ENCODE measurements at regions of chr22 and their contacts with region 1.

Region 1: GRCh38 chr22:49767355-49768062 is 60.2 kb downstream of the BRD1 start:
- DNase-seq: peak; percentile 61
- H3K4me3 ChIP-seq: no peak overlapping the region
- H3K27ac ChIP-seq: no peak overlapping the region
- H3K4me1 ChIP-seq: peaks cover 0 to 16% (median 12%) of the 10 kb centered on the region in 4 donors
- H3K27me3 ChIP-seq: no peaks in the 10 kb centered on the region
- CTCF ChIP-seq: peak; percentile 49 to 69 (median 59)
- EP300 ChIP-seq: no peak
- POLR2A ChIP-seq: no peak

Region 2: DNA sequence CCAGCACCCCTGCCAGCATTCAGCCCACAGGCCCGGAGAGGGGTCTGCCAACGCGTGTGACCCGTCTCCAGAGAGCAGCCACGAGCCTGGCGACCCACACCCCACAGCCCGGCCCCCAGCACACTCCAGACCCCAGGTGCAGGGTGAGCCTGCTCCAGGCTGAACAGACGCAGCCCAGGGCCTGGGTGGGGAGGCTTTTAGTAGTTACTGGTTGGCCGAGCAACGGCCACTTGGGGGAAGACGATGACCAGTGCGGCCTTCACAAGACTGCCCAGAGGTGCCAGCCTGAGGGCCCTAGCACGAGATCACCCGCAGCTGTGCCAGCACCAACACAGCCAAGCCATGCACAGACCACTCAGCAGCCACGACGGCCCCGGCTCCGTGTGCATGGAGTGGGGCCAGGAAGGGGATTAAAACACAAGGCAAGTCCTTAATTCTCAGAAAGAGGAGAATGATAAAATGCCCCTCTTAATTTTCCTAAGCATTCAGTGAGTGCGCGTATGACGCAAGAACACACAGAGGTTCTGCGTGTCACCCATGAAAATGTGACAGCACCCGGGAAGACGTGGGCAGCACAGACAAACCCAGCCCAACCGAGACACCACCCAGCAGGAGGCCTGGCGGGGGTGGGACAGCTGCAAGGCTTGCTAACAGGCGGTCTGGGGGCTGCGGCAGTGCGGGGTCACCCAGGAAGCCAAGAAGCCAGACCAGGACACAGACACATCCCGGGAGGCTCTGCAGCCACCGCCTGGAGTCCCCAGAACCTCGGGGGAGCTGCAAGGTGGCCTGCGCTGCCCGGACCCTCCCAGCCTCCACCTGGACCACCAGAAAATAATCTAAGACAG is 12.6 kb after region 1 on chr22:
- intact Hi-C with region 1: no loop called
- DNase-seq: peak; percentile 80
- H3K4me3 ChIP-seq: no peak overlapping the region
- H3K27ac ChIP-seq: peak overlapping the region in 3 of 4 donors; percentile 12 to 51 (median 19)
- H3K4me1 ChIP-seq: peaks cover 0 to 37% (median 31%) of the 10 kb centered on the region in 4 donors
- H3K27me3 ChIP-seq: no peaks in the 10 kb centered on the region
- CTCF ChIP-seq: no peak
- EP300 ChIP-seq: no peak
- POLR2A ChIP-seq: no peak

Region 3: GRCh38 chr22:49917974-49918910 is 150.7 kb after region 1 on chr22 and contains the starts of genes ALG12 and CRELD2:
- intact Hi-C with region 1: loop called (anchors 5 kb)
- DNase-seq: peak; percentile 99
- H3K4me3 ChIP-seq: peak within 1 kb of the TSS; percentile 47 to 93 (median 84)
- H3K27ac ChIP-seq: peak within 1 kb of the TSS; percentile 93 to 97 (median 94)
- H3K4me1 ChIP-seq: peaks cover 0 to 28% (median 22%) of the 10 kb centered on the region in 4 donors
- H3K27me3 ChIP-seq: no peaks in the 10 kb centered on the region
- CTCF ChIP-seq: no peak
- EP300 ChIP-seq: no peak
- POLR2A ChIP-seq: no peak
- total RNA-seq, gene ALG12: 11.4 to 23.9 (median 15.4) TPM
- total RNA-seq, gene CRELD2: 15.5 to 26.5 (median 23.1) TPM

Region 4: GRCh38 chr22:50030297-50031188 is 263.0 kb after region 1 on chr22:
- intact Hi-C with region 1: loop called (anchors 5 kb)
- DNase-seq: peak; percentile 84
- H3K4me3 ChIP-seq: no peak overlapping the region
- H3K27ac ChIP-seq: no peak overlapping the region
- H3K4me1 ChIP-seq: peaks cover 0 to 9% (median 6%) of the 10 kb centered on the region in 4 donors
- H3K27me3 ChIP-seq: peaks cover 0 to 55% (median 21%) of the 10 kb centered on the region in 3 donors
- CTCF ChIP-seq: peak; percentile 69 to 84 (median 74)
- EP300 ChIP-seq: no peak
- POLR2A ChIP-seq: no peak

Region 5: DNA sequence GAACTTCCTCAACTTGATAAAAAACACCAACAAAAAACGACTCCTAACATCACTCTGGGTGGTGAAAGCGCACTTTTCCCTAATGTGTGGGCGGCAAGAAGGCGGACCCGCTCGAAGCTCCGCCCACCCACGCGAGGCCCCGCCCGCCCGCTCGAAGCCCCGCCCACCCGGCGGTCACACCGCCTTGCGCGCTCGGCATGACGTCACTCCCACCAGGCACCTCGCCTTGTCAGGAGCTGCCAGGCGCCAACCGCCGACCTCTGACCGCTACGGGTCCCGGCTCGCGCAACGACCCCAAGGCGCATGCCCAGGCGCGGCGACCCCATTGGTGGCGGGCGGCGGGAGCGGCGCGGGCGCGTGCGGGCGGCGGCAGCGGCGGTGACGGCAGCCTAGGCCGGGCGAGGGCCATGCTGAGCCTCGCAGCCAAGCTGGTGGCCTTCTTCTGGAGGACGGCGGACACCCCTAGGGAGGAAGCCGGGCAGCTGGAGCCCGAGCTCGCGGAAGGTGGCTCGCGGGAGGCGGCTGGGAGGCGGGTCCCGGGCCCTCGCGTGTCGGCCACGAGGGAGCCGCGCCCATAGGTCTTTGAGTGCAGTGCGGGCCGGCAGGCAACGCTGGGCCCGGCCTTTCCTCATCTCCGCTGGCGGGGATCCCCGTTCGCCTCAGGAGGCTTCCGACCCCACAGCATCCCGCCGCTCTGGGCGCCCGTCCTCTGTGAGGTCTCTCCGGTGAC is 322.3 kb after region 1 on chr22 and contains the start of gene MOV10L1:
- intact Hi-C with region 1: no loop called
- DNase-seq: no peak
- H3K4me3 ChIP-seq: no peak within 1 kb of the TSS
- H3K27ac ChIP-seq: no peak within 1 kb of the TSS
- H3K4me1 ChIP-seq: no peaks in the 10 kb centered on the region
- H3K27me3 ChIP-seq: peaks cover 7 to 54% (median 13%) of the 10 kb centered on the region in 3 donors
- CTCF ChIP-seq: no peak
- EP300 ChIP-seq: no peak
- POLR2A ChIP-seq: no peak
- total RNA-seq, gene MOV10L1: 0.82 to 5.6 (median 2.6) TPM

Measured in sigmoid colon (tissue), 7 donors.